Activated CD4-positive, alpha-beta memory T cell treated with anti-CD3 and anti-CD28 coated beads for 36 hours (primary cell): ENCODE measurements at regions of chr3 and their contacts with region 1.

Region 1: GRCh38 chr3:195558602-195559001 is 15.5 kb upstream of the PPP1R2 start:
- DNase-seq: no peak
- H3K4me3 Mint-ChIP-seq: no peak overlapping the region
- H3K27ac Mint-ChIP-seq: no peak overlapping the region
- H3K4me1 Mint-ChIP-seq: peaks cover 25% of the 10 kb centered on the region
- H3K27me3 Mint-ChIP-seq: no peaks in the 10 kb centered on the region

Region 2: GRCh38 chr3:195441476-195441975 is 117.1 kb before region 1 on chr3:
- CTCF ChIA-PET with region 1: no interaction called
- POLR2A ChIA-PET with region 1: no interaction called
- intact Hi-C with region 1: no loop called
- DNase-seq: no peak
- H3K4me3 Mint-ChIP-seq: peak overlapping the region; percentile 92
- H3K27ac Mint-ChIP-seq: peak overlapping the region; percentile 91
- H3K4me1 Mint-ChIP-seq: peaks cover 39% of the 10 kb centered on the region
- H3K27me3 Mint-ChIP-seq: no peaks in the 10 kb centered on the region

Region 3: DNA sequence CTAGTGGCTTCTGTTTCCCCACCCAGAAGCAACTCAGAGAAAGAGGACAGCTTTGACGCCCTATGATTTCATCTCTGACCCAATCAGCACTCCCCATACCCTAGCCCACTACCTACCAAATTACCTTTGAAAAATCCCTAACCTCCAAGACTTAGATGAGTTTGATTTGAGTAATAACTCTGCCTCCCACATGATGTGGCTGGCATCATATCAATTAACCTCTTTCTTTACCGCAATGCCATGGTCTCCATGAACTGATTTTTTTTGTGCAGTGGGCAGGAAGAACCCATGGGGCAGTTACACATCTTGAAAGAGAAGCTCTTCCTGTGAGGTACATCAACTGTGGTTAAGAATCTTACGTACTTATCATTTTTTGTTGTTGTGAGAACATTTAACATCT is 50.6 kb after region 1 on chr3:
- CTCF ChIA-PET with region 1: interaction called, 4 read pairs
- POLR2A ChIA-PET with region 1: no interaction called
- intact Hi-C with region 1: loop called (anchors 2 kb)
- DNase-seq: peak; percentile 66
- H3K4me3 Mint-ChIP-seq: no peak overlapping the region
- H3K27ac Mint-ChIP-seq: peak overlapping the region; percentile 70
- H3K4me1 Mint-ChIP-seq: peaks cover 31% of the 10 kb centered on the region
- H3K27me3 Mint-ChIP-seq: no peaks in the 10 kb centered on the region

Region 4: GRCh38 chr3:195839282-195840010 is 280.8 kb after region 1 on chr3:
- CTCF ChIA-PET with region 1: no interaction called
- POLR2A ChIA-PET with region 1: no interaction called
- intact Hi-C with region 1: no loop called
- DNase-seq: no peak
- H3K4me3 Mint-ChIP-seq: no peak overlapping the region
- H3K27ac Mint-ChIP-seq: no peak overlapping the region
- H3K4me1 Mint-ChIP-seq: no peaks in the 10 kb centered on the region
- H3K27me3 Mint-ChIP-seq: peaks cover 2% of the 10 kb centered on the region